Psoas muscle (tissue), 8 donors: ENCODE measurements at regions of chr1 and their contacts with region 1.

Region 1: DNA sequence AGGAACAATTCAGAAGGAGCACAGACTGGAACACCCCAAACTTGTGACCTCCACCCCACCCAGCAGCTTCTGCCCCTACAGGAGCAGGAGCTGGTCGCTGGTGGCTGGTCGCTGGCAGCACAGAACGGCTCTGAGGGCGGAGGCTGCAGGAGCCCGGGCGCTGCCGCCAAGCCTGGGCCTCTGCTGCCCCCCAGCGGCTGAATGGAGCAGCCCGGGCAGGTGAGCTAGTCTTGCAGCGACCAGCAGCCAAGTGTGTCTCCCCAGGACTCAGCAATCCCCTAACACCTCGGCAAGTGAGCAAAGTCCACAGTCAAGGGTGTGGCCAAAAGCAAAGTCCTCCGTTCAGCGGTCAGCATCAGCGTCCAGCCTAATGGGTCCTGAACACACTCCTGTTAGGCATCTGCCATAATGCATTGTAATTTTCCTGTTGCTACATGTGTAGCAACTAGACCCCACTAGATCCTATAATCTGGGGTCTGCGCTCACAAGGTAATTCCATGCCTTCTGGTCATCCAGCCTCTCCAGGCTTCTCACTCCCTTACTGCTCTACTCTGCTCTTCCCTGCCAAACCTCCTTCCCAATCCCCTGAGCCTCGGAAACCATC is 12.1 kb upstream of the GJB5 start:
- DNase-seq: peak; percentile 79 to 81
- ATAC-seq: peak; percentile 79 to 90 (median 87)
- H3K4me3 ChIP-seq: no peak overlapping the region
- H3K27ac ChIP-seq: no peak overlapping the region
- H3K4me1 ChIP-seq: no peaks in the 10 kb centered on the region
- H3K27me3 ChIP-seq: peaks cover 0 to 21% (median under 1%) of the 10 kb centered on the region in 3 donors
- CTCF ChIP-seq: peak; percentile 91

Region 2: DNA sequence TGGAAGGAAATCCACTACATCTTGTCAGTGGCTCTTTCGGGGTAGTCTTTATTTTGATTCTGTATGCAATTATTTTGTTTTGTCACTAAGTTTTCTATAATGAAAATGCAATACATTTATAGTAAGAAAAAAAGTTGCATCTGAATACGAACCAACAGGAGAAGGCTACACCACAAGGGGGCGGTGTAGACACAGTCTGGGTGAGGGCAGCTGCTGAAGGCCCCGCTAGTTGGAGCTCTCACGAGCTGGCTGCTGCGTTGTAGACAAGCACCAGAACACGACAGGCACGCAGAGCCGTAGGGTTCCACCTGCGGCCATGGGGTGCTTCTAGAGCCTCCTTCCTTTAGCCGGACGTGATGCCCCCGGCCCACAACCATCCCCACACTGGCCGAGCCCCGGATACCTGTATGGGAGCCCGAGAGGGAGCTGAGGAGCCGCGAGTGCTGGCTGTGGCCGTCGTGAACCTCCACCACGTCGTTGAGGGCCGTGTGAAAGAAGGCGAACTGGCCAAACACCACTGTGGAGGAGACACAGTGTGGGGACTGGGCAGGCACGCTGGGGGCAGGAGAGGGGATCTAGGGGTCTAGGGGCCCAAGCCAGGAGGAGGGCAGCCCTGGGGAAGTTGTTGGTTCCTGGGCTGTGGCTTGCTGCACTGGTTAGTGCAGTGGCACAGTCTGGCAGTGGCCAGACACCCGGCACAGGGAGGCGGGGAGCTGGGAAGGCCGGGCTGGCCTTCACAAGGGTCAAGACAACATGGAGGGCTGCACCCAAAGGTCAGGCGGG is 1109.6 kb before region 1 on chr1:
- intact Hi-C with region 1: loop called (anchors 5 kb)
- DNase-seq: peak; percentile 87 to 89
- ATAC-seq: peak; percentile 90 to 95 (median 92)
- H3K4me3 ChIP-seq: no peak overlapping the region
- H3K27ac ChIP-seq: no peak overlapping the region
- H3K4me1 ChIP-seq: no peaks in the 10 kb centered on the region
- H3K27me3 ChIP-seq: peaks cover 0 to 2% (median 0%) of the 10 kb centered on the region in 3 donors
- CTCF ChIP-seq: peak; percentile 90

Region 3: GRCh38 chr1:34460193-34460592 is 282.6 kb before region 1 on chr1:
- intact Hi-C with region 1: loop called in 1 of 2 experiments (anchors 5 kb)
- DNase-seq: peak in 1 of 2 donors; percentile 16
- ATAC-seq: no peak
- H3K4me3 ChIP-seq: no peak overlapping the region
- H3K27ac ChIP-seq: no peak overlapping the region
- H3K4me1 ChIP-seq: no peaks in the 10 kb centered on the region
- H3K27me3 ChIP-seq: peaks cover 0 to under 1% (median 0%) of the 10 kb centered on the region in 3 donors
- CTCF ChIP-seq: peak; percentile 26

Region 4: DNA sequence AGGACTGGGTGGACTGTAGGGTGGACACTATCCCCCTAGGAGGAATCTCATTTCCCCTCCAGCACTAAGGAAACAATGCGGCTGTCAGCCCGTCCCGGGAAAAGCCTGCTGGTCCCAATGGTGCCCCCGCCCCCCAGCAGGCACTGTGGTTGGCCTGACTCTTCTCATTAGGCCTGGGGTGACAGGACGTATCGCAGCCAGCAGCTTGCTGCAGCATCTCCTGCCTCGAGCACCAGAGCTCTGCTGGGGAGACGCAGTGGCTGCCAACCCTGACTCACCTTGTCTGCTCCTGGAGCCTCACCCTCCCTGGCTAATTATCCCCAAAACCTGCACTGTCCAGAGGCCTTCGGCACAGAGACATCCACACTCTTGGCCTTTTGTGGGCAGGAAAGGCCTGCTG is 103.1 kb before region 1 on chr1:
- intact Hi-C with region 1: no loop called
- DNase-seq: no peak
- ATAC-seq: no peak
- H3K4me3 ChIP-seq: no peak overlapping the region
- H3K27ac ChIP-seq: no peak overlapping the region
- H3K4me1 ChIP-seq: no peaks in the 10 kb centered on the region
- H3K27me3 ChIP-seq: peaks cover 0 to 5% (median 3%) of the 10 kb centered on the region in 3 donors
- CTCF ChIP-seq: no peak